Ovary (tissue), 10 donors: ENCODE measurements at regions of chr9 and their contacts with region 1.

Region 1: GRCh38 chr9:114653556-114654159 is 3.9 kb downstream of the TEX53 start:
- DNase-seq: peak; percentile 70 to 86 (median 78)
- H3K4me3 ChIP-seq: no peak overlapping the region
- H3K27ac ChIP-seq: peak overlapping the region in 1 of 2 donors; percentile 41
- H3K4me1 ChIP-seq: peaks cover 1% of the 10 kb centered on the region
- H3K27me3 ChIP-seq: no peaks in the 10 kb centered on the region
- CTCF ChIP-seq: peak; percentile 68 to 82 (median 82)
- EP300 ChIP-seq: no peak
- POLR2A ChIP-seq: peak; percentile 8

Region 2: GRCh38 chr9:114405294-114406034 is 248.2 kb before region 1 on chr9:
- intact Hi-C with region 1: loop called in 3 of 4 experiments (anchors 5 to 10 kb)
- DNase-seq: peak; percentile 71 to 80 (median 79)
- H3K4me3 ChIP-seq: no peak overlapping the region
- H3K27ac ChIP-seq: no peak overlapping the region
- H3K4me1 ChIP-seq: no peaks in the 10 kb centered on the region
- H3K27me3 ChIP-seq: no peaks in the 10 kb centered on the region
- CTCF ChIP-seq: peak; percentile 19 to 65 (median 63)
- EP300 ChIP-seq: no peak
- POLR2A ChIP-seq: no peak

Region 3: GRCh38 chr9:114434878-114435311 is 218.8 kb before region 1 on chr9:
- intact Hi-C with region 1: loop called in 3 of 4 experiments (anchors 2 to 10 kb)
- DNase-seq: peak in 1 of 5 donors; percentile 26
- H3K4me3 ChIP-seq: no peak overlapping the region
- H3K27ac ChIP-seq: no peak overlapping the region
- H3K4me1 ChIP-seq: no peaks in the 10 kb centered on the region
- H3K27me3 ChIP-seq: no peaks in the 10 kb centered on the region
- CTCF ChIP-seq: peak in 2 of 3 donors; percentile 41 to 50
- EP300 ChIP-seq: no peak
- POLR2A ChIP-seq: no peak

Region 4: GRCh38 chr9:114580698-114581097 is 73.0 kb before region 1 on chr9:
- intact Hi-C with region 1: loop called in 1 of 4 experiments (anchors 5 kb)
- DNase-seq: no peak
- H3K4me3 ChIP-seq: no peak overlapping the region
- H3K27ac ChIP-seq: no peak overlapping the region
- H3K4me1 ChIP-seq: no peaks in the 10 kb centered on the region
- H3K27me3 ChIP-seq: no peaks in the 10 kb centered on the region
- CTCF ChIP-seq: no peak
- EP300 ChIP-seq: no peak
- POLR2A ChIP-seq: no peak

Region 5: GRCh38 chr9:114587385-114588202 is 66.1 kb before region 1 on chr9 and contains the start of gene ATP6V1G1:
- intact Hi-C with region 1: loop called in 2 of 4 experiments (anchors 5 kb)
- DNase-seq: peak; percentile 99 to 100 (median 100)
- H3K4me3 ChIP-seq: peak within 1 kb of the TSS; percentile 94
- H3K27ac ChIP-seq: peak within 1 kb of the TSS; percentile 73 to 76
- H3K4me1 ChIP-seq: peaks cover 13% of the 10 kb centered on the region
- H3K27me3 ChIP-seq: no peaks in the 10 kb centered on the region
- CTCF ChIP-seq: peak in 2 of 3 donors; percentile 11 to 27
- EP300 ChIP-seq: no peak
- POLR2A ChIP-seq: peak; percentile 95
- total RNA-seq, gene ATP6V1G1: 93.5 to 211 (median 106) TPM